ENCODE measurements at regions of chr20 and their contacts with region 1.

Region 1: GRCh38 chr20:5933802-5934436 is 16.4 kb downstream of the TRMT6 start:
- DNase-seq: no peak
- ATAC-seq: peak; percentile 64 to 75
- H3K4me3 ChIP-seq: no peak overlapping the region
- H3K27ac ChIP-seq: no peak overlapping the region
- H3K4me1 ChIP-seq: no peaks in the 10 kb centered on the region
- H3K27me3 ChIP-seq: no peaks in the 10 kb centered on the region
- CTCF ChIP-seq: peak in 4 of 5 experiments; percentile 21 to 38 (median 28)
- POLR2A ChIP-seq: no peak

Region 2: DNA sequence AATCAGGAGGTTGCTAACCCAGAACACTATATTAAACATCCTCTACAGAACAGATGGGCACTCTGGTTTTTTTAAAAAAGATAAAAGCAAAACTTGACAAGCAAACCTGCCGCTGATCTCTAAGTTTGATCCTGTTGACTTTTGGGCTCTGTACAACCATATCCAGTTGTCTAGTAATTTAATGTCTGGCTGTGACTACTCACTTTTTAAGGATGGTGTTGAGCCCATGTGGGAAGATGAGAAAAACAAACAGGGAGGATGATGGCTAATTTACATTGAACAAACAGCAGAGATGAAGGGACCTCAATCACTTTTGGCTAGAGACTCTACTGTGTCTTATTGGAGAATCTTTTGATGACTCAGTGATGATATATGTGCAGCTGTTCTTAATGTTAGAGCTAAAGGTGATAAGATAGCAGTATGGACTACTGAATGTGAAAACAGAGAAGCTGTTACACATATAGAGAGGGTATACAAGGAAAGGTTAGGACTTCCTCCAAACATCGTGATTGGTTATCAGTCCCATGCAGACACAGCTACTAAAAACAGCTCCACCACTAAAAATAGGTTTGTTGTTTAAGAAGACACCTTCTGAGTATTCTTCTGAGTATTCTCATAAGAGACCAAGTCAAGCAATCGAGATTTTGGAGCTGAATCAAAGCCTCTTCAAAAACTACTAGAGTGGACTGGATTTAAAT is 384.9 kb before region 1 on chr20:
- in situ Hi-C with region 1: loop called in 3 of 4 experiments (anchors 10 to 25 kb)
- intact Hi-C with region 1: loop called (anchors 10 kb)
- DNase-seq: no peak
- ATAC-seq: no peak
- H3K4me3 ChIP-seq: no peak overlapping the region
- H3K27ac ChIP-seq: no peak overlapping the region
- H3K4me1 ChIP-seq: no peaks in the 10 kb centered on the region
- H3K27me3 ChIP-seq: no peaks in the 10 kb centered on the region
- CTCF ChIP-seq: no peak
- POLR2A ChIP-seq: no peak

Region 3: DNA sequence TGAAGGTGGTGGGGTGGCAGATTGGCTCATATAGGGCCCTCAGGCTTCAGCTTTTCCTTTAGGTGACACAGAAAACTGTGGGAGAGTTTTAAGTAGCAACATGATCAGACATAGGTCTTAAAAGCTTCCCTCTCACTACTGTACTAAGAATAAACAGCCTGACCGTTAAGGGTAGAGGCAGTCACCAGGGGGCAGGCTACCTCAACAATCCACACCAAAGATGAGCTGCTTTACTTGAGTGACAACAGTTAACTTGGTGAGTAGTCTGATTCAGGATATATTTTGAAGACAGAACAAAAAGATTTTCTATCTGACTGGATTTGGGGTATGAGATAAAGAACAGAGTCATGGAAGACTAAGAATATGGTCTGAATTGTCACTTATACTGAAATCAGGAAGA is 376.8 kb before region 1 on chr20:
- in situ Hi-C with region 1: no loop called
- intact Hi-C with region 1: loop called (anchors 10 kb)
- DNase-seq: peak in 1 of 2 donors; percentile 24
- ATAC-seq: peak; percentile 54 to 60
- H3K4me3 ChIP-seq: no peak overlapping the region
- H3K27ac ChIP-seq: no peak overlapping the region
- H3K4me1 ChIP-seq: no peaks in the 10 kb centered on the region
- H3K27me3 ChIP-seq: no peaks in the 10 kb centered on the region
- CTCF ChIP-seq: peak in 4 of 5 experiments; percentile 26 to 44 (median 38)
- POLR2A ChIP-seq: no peak

Region 4: DNA sequence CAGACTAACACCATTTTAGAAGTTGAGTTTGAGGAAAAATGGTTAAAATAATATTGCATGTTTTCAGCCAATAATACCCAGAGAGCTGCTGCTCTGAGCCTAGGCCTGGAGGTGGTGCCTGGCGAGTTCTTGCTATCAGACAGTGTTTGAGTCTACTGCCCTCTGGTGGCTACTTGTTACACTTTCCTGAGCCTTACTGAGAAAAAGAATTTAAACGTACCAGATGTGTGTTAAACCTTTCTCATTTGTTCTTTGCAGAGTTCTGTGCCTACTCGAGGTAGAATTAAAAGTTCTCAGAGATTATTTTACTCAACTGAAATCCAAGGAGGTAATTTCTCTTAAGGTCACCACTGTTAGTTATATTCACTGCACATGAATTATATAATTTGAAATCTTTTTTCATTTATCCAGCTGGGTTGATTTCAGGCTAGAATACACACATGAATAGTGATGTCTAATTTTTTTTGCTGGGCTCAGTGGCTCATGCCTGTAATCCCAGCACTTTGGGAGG is 145.5 kb before region 1 on chr20:
- in situ Hi-C with region 1: no loop called
- intact Hi-C with region 1: loop called (anchors 5 kb)
- DNase-seq: peak; percentile 74 to 75
- ATAC-seq: peak; percentile 76 to 84
- H3K4me3 ChIP-seq: no peak overlapping the region
- H3K27ac ChIP-seq: no peak overlapping the region
- H3K4me1 ChIP-seq: peaks cover 16 to 24% of the 10 kb centered on the region in 2 donors
- H3K27me3 ChIP-seq: no peaks in the 10 kb centered on the region
- CTCF ChIP-seq: peak; percentile 86 to 93 (median 89)
- POLR2A ChIP-seq: no peak

Region 5: GRCh38 chr20:5822569-5822968 is 111.3 kb before region 1 on chr20:
- in situ Hi-C with region 1: no loop called
- intact Hi-C with region 1: loop called (anchors 5 kb)
- DNase-seq: no peak
- ATAC-seq: no peak
- H3K4me3 ChIP-seq: no peak overlapping the region
- H3K27ac ChIP-seq: peak overlapping the region in 1 of 4 donors; percentile 54
- H3K4me1 ChIP-seq: peaks cover 23 to 25% of the 10 kb centered on the region in 2 donors
- H3K27me3 ChIP-seq: no peaks in the 10 kb centered on the region
- CTCF ChIP-seq: no peak
- POLR2A ChIP-seq: no peak